ENCODE measurements at regions of chr5 and their contacts with region 1.

Region 1: GRCh38 chr5:114449860-114450421 is 88.1 kb downstream of the KCNN2 start:
- DNase-seq: peak; percentile 70
- H3K4me3 ChIP-seq: no peak overlapping the region
- H3K27ac ChIP-seq: no peak overlapping the region
- H3K4me1 ChIP-seq: no peaks in the 10 kb centered on the region
- H3K27me3 ChIP-seq: peaks cover 3% of the 10 kb centered on the region; the same call in 1 of the 2 replicates

Region 2: DNA sequence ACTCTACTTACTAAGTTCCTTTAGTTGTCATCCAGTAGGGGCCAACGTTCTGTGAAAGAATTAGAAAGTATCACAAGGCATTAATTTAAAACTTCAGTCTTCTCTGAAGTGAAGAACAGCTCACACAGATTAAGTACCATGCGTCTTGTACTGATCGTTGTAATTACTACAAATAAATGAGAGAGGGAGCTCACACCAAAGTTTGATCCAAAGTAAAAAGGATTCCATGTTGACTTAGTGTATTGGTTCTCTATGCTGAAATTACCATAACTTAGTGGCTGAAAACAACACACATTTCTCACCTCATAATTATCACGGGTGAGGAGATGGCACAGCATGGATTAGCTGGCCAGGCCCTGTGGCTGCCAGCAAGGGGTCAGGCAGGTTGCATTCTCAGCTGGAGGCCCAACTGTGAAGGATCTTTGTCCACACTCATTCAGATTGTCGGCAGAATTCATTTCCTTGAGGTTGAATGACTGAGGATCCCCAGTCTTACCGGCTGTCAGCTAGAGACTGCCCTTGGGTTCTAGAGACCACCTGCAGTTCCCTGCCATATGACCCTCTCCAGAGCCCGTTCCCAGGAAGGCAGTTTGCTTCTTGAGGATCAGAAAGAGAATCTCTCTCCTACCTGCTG is 767.3 kb before region 1 on chr5:
- in situ Hi-C with region 1: loop called (anchors 10 kb)
- DNase-seq: peak; percentile 15
- H3K4me3 ChIP-seq: no peak overlapping the region
- H3K27ac ChIP-seq: no peak overlapping the region
- H3K4me1 ChIP-seq: no peaks in the 10 kb centered on the region
- H3K27me3 ChIP-seq: no peaks in the 10 kb centered on the region; the same call in 1 of the 2 replicates

Region 3: DNA sequence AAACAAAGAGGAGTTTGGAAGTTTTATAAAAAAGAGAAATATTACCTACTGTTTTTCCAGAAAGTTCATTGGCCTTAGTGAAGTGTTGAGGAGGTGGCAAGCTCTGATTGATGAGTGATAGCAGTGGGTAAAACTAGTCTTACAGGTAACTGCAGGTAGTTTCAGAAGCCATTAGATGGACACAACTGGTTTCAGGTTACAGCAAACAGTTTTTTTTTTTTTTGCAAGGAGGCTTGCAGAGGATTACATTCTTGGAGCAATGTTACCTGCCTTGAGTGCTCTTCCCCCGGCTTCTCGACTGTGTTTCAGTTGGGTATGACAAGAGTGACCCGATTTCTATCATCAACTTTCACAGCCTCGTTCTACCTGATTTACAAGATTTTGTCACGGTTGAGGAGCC is 603.0 kb before region 1 on chr5:
- in situ Hi-C with region 1: no loop called
- DNase-seq: no peak
- H3K4me3 ChIP-seq: no peak overlapping the region
- H3K27ac ChIP-seq: no peak overlapping the region
- H3K4me1 ChIP-seq: no peaks in the 10 kb centered on the region
- H3K27me3 ChIP-seq: no peaks in the 10 kb centered on the region

Measured in GM23248 (cell line).